Motor neuron (in vitro differentiated cells): ENCODE measurements at regions of chr4 and their contacts with region 1.

Region 1: GRCh38 chr4:110344162-110344561 is 131.8 kb upstream of the ENPEP start:
- ATAC-seq: peak in 3 of 8 experiments; percentile 63 to 76 (median 72)
- H3K4me3 ChIP-seq: no peak overlapping the region
- H3K27ac ChIP-seq: no peak overlapping the region
- H3K4me1 ChIP-seq: peaks cover 3 to 23% of the 10 kb centered on the region in 2 donors

Region 2: DNA sequence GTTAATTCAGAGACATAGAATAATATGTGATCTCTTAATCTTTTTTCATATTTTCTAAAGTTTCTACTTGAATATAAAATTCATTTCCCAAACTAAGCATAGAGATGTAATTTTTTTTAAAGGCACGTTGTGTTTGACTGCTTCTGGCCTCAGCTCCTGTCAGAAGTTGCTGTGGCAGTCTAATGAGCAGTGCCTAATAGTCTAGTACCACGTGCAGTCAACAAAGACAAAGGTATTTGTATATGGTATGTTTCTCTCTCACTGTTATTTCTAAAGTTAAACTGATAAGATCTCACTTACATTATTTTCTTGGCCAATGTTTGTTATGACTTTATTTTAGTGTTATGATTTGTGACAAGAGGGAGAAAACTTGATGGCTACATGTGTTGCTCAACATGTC is 832.7 kb before region 1 on chr4:
- in situ Hi-C with region 1: no loop called
- ATAC-seq: no peak
- H3K4me3 ChIP-seq: no peak overlapping the region
- H3K27ac ChIP-seq: no peak overlapping the region
- H3K4me1 ChIP-seq: no peaks in the 10 kb centered on the region

Region 3: DNA sequence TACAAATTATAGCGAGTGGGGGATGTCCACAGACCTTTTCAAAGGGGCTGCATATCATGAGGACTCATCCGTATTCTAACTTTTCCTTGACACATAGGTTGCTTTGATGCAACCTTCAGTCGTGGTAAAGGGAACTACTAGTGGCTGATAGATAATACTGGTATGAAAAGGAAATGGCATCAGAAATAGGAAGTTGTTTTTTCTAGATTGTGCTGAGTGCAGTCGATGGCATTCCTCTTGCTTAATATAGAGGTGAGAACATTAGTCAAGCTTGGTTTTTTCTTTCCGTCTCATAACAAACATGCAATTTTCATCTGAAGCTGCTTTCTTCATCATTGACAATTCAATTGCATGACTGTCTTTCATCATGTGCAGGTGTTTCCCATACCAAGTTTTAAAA is 148.4 kb after region 1 on chr4:
- in situ Hi-C with region 1: no loop called
- ATAC-seq: no peak
- H3K4me3 ChIP-seq: no peak overlapping the region
- H3K27ac ChIP-seq: no peak overlapping the region
- H3K4me1 ChIP-seq: peaks cover 2 to 11% of the 10 kb centered on the region in 2 donors

Region 4: GRCh38 chr4:110508827-110509710 is 164.9 kb after region 1 on chr4:
- in situ Hi-C with region 1: loop called in 3 of 9 experiments (anchors 10 to 25 kb)
- ATAC-seq: peak in 3 of 8 experiments; percentile 31 to 67 (median 59)
- H3K4me3 ChIP-seq: no peak overlapping the region
- H3K27ac ChIP-seq: no peak overlapping the region
- H3K4me1 ChIP-seq: no peaks in the 10 kb centered on the region

Region 5: GRCh38 chr4:110516106-110516922 is 172.2 kb after region 1 on chr4:
- in situ Hi-C with region 1: loop called in 2 of 9 experiments (anchors 25 kb)
- ATAC-seq: peak in 4 of 8 experiments; percentile 58 to 97 (median 84)
- H3K4me3 ChIP-seq: no peak overlapping the region
- H3K27ac ChIP-seq: no peak overlapping the region
- H3K4me1 ChIP-seq: no peaks in the 10 kb centered on the region

Region 6: GRCh38 chr4:110854021-110854678 is 510.0 kb after region 1 on chr4:
- in situ Hi-C with region 1: no loop called
- ATAC-seq: peak in 2 of 8 experiments; percentile 45 to 54
- H3K4me3 ChIP-seq: no peak overlapping the region
- H3K27ac ChIP-seq: no peak overlapping the region
- H3K4me1 ChIP-seq: peaks cover 0 to 8% of the 10 kb centered on the region in 2 donors

Region 7: GRCh38 chr4:110933341-110933740 is 589.2 kb after region 1 on chr4:
- in situ Hi-C with region 1: no loop called
- ATAC-seq: no peak
- H3K4me3 ChIP-seq: no peak overlapping the region
- H3K27ac ChIP-seq: no peak overlapping the region
- H3K4me1 ChIP-seq: no peaks in the 10 kb centered on the region